ENCODE measurements at regions of chr7 and their contacts with region 1.

Region 1: GRCh38 chr7:127585044-127585953 is at the start of gene GCC1:
- DNase-seq: peak; percentile 96
- ATAC-seq: peak; percentile 88
- total RNA-seq, gene GCC1: 7.0 TPM

Region 2: GRCh38 chr7:127066974-127067373 is 518.3 kb before region 1 on chr7:
- intact Hi-C with region 1: no loop called
- DNase-seq: no peak
- ATAC-seq: no peak

Region 3: GRCh38 chr7:127392566-127393367 is 192.5 kb before region 1 on chr7 and contains the start of gene ZNF800:
- intact Hi-C with region 1: loop called (anchors 10 kb)
- DNase-seq: peak; percentile 93
- ATAC-seq: peak; percentile 99
- total RNA-seq, gene ZNF800: 17.6 TPM

Region 4: GRCh38 chr7:127536741-127537140 is 48.6 kb before region 1 on chr7:
- intact Hi-C with region 1: no loop called
- DNase-seq: no peak
- ATAC-seq: no peak

Region 5: DNA sequence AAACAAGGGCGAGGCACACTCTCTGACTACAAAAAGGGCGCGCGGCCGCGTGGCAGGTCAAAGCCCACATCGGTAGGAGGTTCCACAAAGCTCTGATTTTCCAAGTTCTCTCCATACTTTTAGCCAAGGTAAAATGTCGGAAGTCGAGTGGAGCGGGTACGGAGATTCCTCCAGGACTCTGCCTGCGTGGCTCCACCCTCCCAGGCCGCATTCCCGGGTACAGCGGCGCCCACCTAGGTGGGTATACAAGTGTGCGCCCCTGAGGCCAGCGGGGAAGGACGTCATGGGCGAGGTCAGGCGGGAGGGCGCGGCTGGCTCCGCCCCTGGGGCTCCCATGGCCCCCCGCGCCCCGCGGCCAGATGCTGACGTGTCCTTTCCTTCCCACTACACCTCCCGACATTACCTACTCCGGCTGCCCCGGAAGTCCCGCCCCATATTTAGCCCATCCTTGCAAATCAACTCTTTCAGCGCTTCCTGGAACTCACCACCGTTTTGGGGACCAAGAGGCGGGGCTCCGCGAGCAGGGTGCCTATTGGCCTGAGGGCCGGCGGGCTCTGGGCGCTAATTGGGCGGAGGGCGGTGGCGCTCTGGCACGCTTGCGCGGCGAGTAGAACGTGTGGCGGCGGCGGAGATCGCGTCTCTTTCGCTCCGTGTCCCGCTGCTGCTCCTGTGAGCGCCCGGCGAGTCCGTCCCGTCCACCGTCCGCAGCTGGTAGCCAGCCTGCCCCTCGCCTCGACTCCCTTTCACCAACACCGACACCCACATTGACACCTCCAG is 66.4 kb after region 1 on chr7 and contains the start of gene SND1:
- intact Hi-C with region 1: loop called (anchors 5 kb)
- DNase-seq: peak; percentile 99
- ATAC-seq: peak; percentile 98
- total RNA-seq, gene SND1: 81.9 TPM